CD8-positive, alpha-beta T cell (primary cell): ENCODE measurements at regions of chr2 and their contacts with region 1.

Region 1: DNA sequence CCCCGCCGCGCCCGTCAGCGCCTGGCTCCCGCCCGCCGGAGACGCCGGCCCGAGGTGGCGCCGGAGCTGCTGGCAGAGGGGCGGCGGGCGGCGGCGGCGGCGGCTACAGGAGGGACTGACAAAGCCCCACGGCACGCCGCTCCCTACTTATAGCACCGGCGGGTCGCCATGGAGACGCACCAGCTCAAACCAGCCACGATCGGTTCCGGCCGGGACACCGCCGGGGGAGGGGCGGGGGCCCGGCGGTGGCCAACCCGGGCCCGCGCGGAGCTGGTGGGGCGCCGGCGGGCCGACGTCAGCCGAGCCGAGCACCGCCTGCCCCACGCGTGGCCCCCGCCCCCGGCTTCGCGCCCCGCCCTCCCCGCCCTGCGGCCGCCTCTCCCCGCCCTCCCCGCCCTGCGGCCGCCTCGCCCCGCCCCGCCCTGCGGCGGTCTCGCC is at the start of gene ODC1:
- DNase-seq: peak; percentile 96 to 100 (median 98)
- ATAC-seq: peak; percentile 81
- H3K4me3 ChIP-seq: peak within 1 kb of the TSS; percentile 61 to 83
- H3K4me3 Mint-ChIP-seq: peak within 1 kb of the TSS; percentile 85
- H3K27ac ChIP-seq: peak within 1 kb of the TSS; percentile 87 to 97
- H3K27ac Mint-ChIP-seq: peak within 1 kb of the TSS; percentile 88
- H3K4me1 ChIP-seq: peaks cover 23% of the 10 kb centered on the region
- H3K4me1 Mint-ChIP-seq: peaks cover 39% of the 10 kb centered on the region
- H3K27me3 ChIP-seq: no peaks in the 10 kb centered on the region
- H3K27me3 Mint-ChIP-seq: no peaks in the 10 kb centered on the region
- CTCF ChIP-seq: no peak
- total RNA-seq, gene ODC1: 157 to 162 TPM

Region 2: DNA sequence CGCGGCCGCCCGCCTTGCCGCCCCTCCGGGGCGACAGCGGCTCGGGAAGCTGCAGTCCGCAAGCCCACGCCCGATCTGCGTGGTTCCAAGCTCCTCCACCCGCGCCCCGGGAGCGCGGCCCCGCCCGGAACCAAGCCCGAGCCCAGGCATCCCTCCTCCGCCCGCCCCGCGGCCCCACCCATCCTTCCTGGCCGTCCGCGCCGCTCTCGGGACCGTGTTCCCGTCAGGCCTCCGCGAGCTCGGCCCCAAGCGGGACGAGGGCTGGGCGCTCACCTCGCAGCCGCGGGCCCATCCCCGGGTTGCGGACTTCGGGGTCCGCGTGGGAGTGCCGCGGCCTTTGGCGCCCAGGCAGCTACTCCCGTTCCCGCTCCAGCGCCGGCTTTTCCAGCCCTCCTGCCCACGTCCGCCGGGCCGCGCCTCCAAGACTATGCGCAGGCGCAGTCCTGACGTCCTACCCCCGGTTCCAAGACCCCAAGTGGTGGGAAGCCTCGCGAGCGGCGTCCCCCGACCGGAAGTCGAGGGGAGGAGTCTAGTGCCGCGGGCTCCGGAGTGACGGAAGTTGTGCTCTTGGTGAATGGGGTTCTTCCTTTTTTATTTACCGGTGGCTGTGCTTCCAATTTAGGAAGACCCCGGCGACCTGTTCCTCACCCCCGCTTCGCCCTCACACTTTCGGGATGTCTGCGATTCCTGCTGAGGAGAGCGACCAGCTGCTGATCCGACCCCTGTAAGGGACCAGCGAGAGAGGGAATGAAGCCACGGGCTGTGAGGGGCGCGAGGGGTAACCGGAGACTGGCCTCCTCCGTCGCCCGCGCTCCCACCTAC is 1024.9 kb before region 1 on chr2 and contains the starts of genes CPSF3 and ITGB1BP1:
- CTCF ChIA-PET with region 1: no interaction called
- POLR2A ChIA-PET with region 1: no interaction called
- intact Hi-C with region 1: loop called in 1 of 2 experiments (anchors 5 kb)
- DNase-seq: peak; percentile 92 to 99 (median 97)
- ATAC-seq: peak; percentile 86
- H3K4me3 ChIP-seq: peak within 1 kb of the TSS; percentile 93 to 98
- H3K4me3 Mint-ChIP-seq: no peak within 1 kb of the TSS
- H3K27ac ChIP-seq: peak within 1 kb of the TSS; percentile 89 to 90
- H3K27ac Mint-ChIP-seq: peak within 1 kb of the TSS; percentile 89
- H3K4me1 ChIP-seq: peaks cover 22% of the 10 kb centered on the region
- H3K4me1 Mint-ChIP-seq: peaks cover 34% of the 10 kb centered on the region
- H3K27me3 ChIP-seq: no peaks in the 10 kb centered on the region
- H3K27me3 Mint-ChIP-seq: no peaks in the 10 kb centered on the region
- CTCF ChIP-seq: no peak
- total RNA-seq, gene CPSF3: 14.1 to 14.7 TPM
- total RNA-seq, gene ITGB1BP1: 37.2 to 38.8 TPM

Region 3: GRCh38 chr2:9843229-9844035 is 604.8 kb before region 1 on chr2 and contains the start of gene TAF1B:
- CTCF ChIA-PET with region 1: no interaction called
- POLR2A ChIA-PET with region 1: no interaction called
- intact Hi-C with region 1: loop called in 1 of 2 experiments (anchors 10 kb)
- DNase-seq: peak; percentile 53 to 93 (median 84)
- ATAC-seq: peak; percentile 84
- H3K4me3 ChIP-seq: peak within 1 kb of the TSS; percentile 71 to 74
- H3K4me3 Mint-ChIP-seq: peak within 1 kb of the TSS; percentile 93
- H3K27ac ChIP-seq: peak within 1 kb of the TSS; percentile 65 to 84
- H3K27ac Mint-ChIP-seq: peak within 1 kb of the TSS; percentile 90
- H3K4me1 ChIP-seq: peaks cover 20% of the 10 kb centered on the region
- H3K4me1 Mint-ChIP-seq: peaks cover 48% of the 10 kb centered on the region
- H3K27me3 ChIP-seq: no peaks in the 10 kb centered on the region
- H3K27me3 Mint-ChIP-seq: no peaks in the 10 kb centered on the region
- CTCF ChIP-seq: no peak
- total RNA-seq, gene TAF1B: 13.3 to 15.8 TPM

Region 4: GRCh38 chr2:10302479-10303180 is 145.6 kb before region 1 on chr2 and contains the start of gene HPCAL1:
- CTCF ChIA-PET with region 1: interaction called, 4 read pairs
- POLR2A ChIA-PET with region 1: interaction called, 8 read pairs
- intact Hi-C with region 1: loop called (anchors 1 kb)
- DNase-seq: peak; percentile 54 to 90 (median 80)
- ATAC-seq: peak; percentile 67
- H3K4me3 ChIP-seq: peak within 1 kb of the TSS; percentile 84 to 86
- H3K4me3 Mint-ChIP-seq: peak within 1 kb of the TSS; percentile 98
- H3K27ac ChIP-seq: peak within 1 kb of the TSS; percentile 52 to 73
- H3K27ac Mint-ChIP-seq: peak within 1 kb of the TSS; percentile 92
- H3K4me1 ChIP-seq: peaks cover 60% of the 10 kb centered on the region
- H3K4me1 Mint-ChIP-seq: peaks cover 70% of the 10 kb centered on the region
- H3K27me3 ChIP-seq: no peaks in the 10 kb centered on the region
- H3K27me3 Mint-ChIP-seq: no peaks in the 10 kb centered on the region
- CTCF ChIP-seq: peak; percentile 61
- total RNA-seq, gene HPCAL1: 25.0 to 25.6 TPM

Region 5: GRCh38 chr2:10504994-10505820 is 57.0 kb after region 1 on chr2:
- CTCF ChIA-PET with region 1: no interaction called
- POLR2A ChIA-PET with region 1: no interaction called
- intact Hi-C with region 1: no loop called
- DNase-seq: peak in 1 of 9 experiments; percentile 44
- ATAC-seq: no peak
- H3K4me3 ChIP-seq: no peak overlapping the region
- H3K4me3 Mint-ChIP-seq: no peak overlapping the region
- H3K27ac ChIP-seq: no peak overlapping the region
- H3K27ac Mint-ChIP-seq: no peak overlapping the region
- H3K4me1 ChIP-seq: no peaks in the 10 kb centered on the region
- H3K4me1 Mint-ChIP-seq: no peaks in the 10 kb centered on the region
- H3K27me3 ChIP-seq: no peaks in the 10 kb centered on the region
- H3K27me3 Mint-ChIP-seq: peaks cover 6% of the 10 kb centered on the region
- CTCF ChIP-seq: no peak

Region 6: GRCh38 chr2:10544252-10544651 is 96.0 kb after region 1 on chr2:
- CTCF ChIA-PET with region 1: no interaction called
- POLR2A ChIA-PET with region 1: interaction called, 9 read pairs
- intact Hi-C with region 1: loop called in 1 of 2 experiments (anchors 5 kb)
- DNase-seq: peak; percentile 2 to 86 (median 50)
- ATAC-seq: peak; percentile 97
- H3K4me3 ChIP-seq: no peak overlapping the region
- H3K4me3 Mint-ChIP-seq: peak overlapping the region; percentile 9
- H3K27ac ChIP-seq: no peak overlapping the region
- H3K27ac Mint-ChIP-seq: peak overlapping the region; percentile 38
- H3K4me1 ChIP-seq: peaks cover 19% of the 10 kb centered on the region
- H3K4me1 Mint-ChIP-seq: peaks cover 29% of the 10 kb centered on the region
- H3K27me3 ChIP-seq: peaks cover 0 to 2% of the 10 kb centered on the region in 2 experiments
- H3K27me3 Mint-ChIP-seq: peaks cover 17% of the 10 kb centered on the region
- CTCF ChIP-seq: no peak

Region 7: GRCh38 chr2:11154923-11155380 is 706.7 kb after region 1 on chr2:
- CTCF ChIA-PET with region 1: no interaction called
- POLR2A ChIA-PET with region 1: no interaction called
- intact Hi-C with region 1: loop called in 1 of 2 experiments (anchors 2 kb)
- DNase-seq: peak; percentile 96 to 99 (median 98)
- ATAC-seq: peak; percentile 91
- H3K4me3 ChIP-seq: peak overlapping the region; percentile 55 to 57
- H3K4me3 Mint-ChIP-seq: peak overlapping the region; percentile 80
- H3K27ac ChIP-seq: peak overlapping the region; percentile 68 to 78
- H3K27ac Mint-ChIP-seq: peak overlapping the region; percentile 85
- H3K4me1 ChIP-seq: peaks cover 18% of the 10 kb centered on the region
- H3K4me1 Mint-ChIP-seq: peaks cover 20% of the 10 kb centered on the region
- H3K27me3 ChIP-seq: no peaks in the 10 kb centered on the region
- H3K27me3 Mint-ChIP-seq: no peaks in the 10 kb centered on the region
- CTCF ChIP-seq: no peak